ENCODE measurements at regions of chr5 and their contacts with region 1.

Region 1: GRCh38 chr5:4879693-4880303 is 260.3 kb upstream of the ADAMTS16 start:
- DNase-seq: peak; percentile 38 to 67
- ATAC-seq: peak; percentile 78 to 93
- H3K4me3 ChIP-seq: no peak overlapping the region
- H3K27ac ChIP-seq: no peak overlapping the region
- H3K4me1 ChIP-seq: no peaks in the 10 kb centered on the region
- H3K27me3 ChIP-seq: no peaks in the 10 kb centered on the region
- CTCF ChIP-seq: peak; percentile 70 to 91 (median 80)
- POLR2A ChIP-seq: no peak

Region 2: GRCh38 chr5:4941957-4942830 is 62.4 kb after region 1 on chr5:
- in situ Hi-C with region 1: no loop called
- intact Hi-C with region 1: loop called (anchors 1 kb)
- DNase-seq: no peak
- ATAC-seq: no peak
- H3K4me3 ChIP-seq: no peak overlapping the region
- H3K27ac ChIP-seq: no peak overlapping the region
- H3K4me1 ChIP-seq: no peaks in the 10 kb centered on the region
- H3K27me3 ChIP-seq: no peaks in the 10 kb centered on the region
- CTCF ChIP-seq: peak; percentile 30 to 72 (median 58)
- POLR2A ChIP-seq: no peak

Region 3: GRCh38 chr5:5381310-5381913 is 501.6 kb after region 1 on chr5:
- in situ Hi-C with region 1: loop called in 1 of 4 experiments (anchors 25 kb)
- intact Hi-C with region 1: no loop called
- DNase-seq: no peak
- ATAC-seq: no peak
- H3K4me3 ChIP-seq: no peak overlapping the region
- H3K27ac ChIP-seq: no peak overlapping the region
- H3K4me1 ChIP-seq: no peaks in the 10 kb centered on the region
- H3K27me3 ChIP-seq: no peaks in the 10 kb centered on the region
- CTCF ChIP-seq: no peak
- POLR2A ChIP-seq: no peak

Measured in gastrocnemius medialis (tissue), 4 donors.